IMR-90 (cell line): ENCODE measurements at regions of chr10 and their contacts with region 1.

Region 1: GRCh38 chr10:104317195-104317767 is 21.0 kb downstream of the ITPRIP start:
- DNase-seq: peak; percentile 81
- ATAC-seq: peak; percentile 57
- H3K4me3 ChIP-seq: no peak overlapping the region
- H3K27ac ChIP-seq: peak overlapping the region; percentile 44; the same call in 1 of the 2 replicates
- H3K4me1 ChIP-seq: peaks cover 42% of the 10 kb centered on the region
- H3K27me3 ChIP-seq: no peaks in the 10 kb centered on the region
- CTCF ChIP-seq: 0 out of 2 replicates have a peak, but pooled peaks have one; percentile 1
- POLR2A ChIP-seq: peak; percentile 18
- RAD21 ChIP-seq: no peak

Region 2: DNA sequence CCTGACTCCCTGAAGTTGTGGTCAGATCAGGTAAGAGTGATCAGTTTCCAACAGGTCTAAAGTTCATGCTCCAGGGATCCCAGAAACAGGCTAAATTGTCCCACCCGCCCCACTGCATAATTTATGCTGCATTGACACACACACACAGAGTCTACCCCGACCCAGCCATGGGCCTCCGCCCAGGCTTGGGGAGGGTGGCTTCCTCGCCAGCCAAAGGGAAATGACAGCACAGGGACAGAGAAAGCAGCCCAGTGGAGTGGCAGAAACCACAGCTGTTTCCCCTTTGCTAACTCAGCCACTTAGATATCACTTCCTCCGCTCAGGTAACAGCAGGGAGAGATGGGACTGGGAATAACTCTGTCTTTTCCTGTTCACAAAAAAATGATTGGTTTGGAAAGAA is 471.3 kb before region 1 on chr10:
- CTCF ChIA-PET with region 1: no interaction called
- POLR2A ChIA-PET with region 1: no interaction called
- dilution Hi-C with region 1: no loop called
- in situ Hi-C with region 1: no loop called
- intact Hi-C with region 1: no loop called
- DNase-seq: no peak
- ATAC-seq: no peak
- H3K4me3 ChIP-seq: no peak overlapping the region
- H3K27ac ChIP-seq: no peak overlapping the region
- H3K4me1 ChIP-seq: peaks cover 20% of the 10 kb centered on the region
- H3K27me3 ChIP-seq: no peaks in the 10 kb centered on the region
- CTCF ChIP-seq: no peak
- POLR2A ChIP-seq: no peak
- RAD21 ChIP-seq: no peak

Region 3: GRCh38 chr10:104127411-104127810 is 189.9 kb before region 1 on chr10:
- CTCF ChIA-PET with region 1: no interaction called
- POLR2A ChIA-PET with region 1: no interaction called
- dilution Hi-C with region 1: no loop called
- in situ Hi-C with region 1: no loop called
- intact Hi-C with region 1: no loop called
- DNase-seq: no peak
- ATAC-seq: peak; percentile 29; the same call in 1 of the 2 replicates
- H3K4me3 ChIP-seq: no peak overlapping the region
- H3K27ac ChIP-seq: no peak overlapping the region
- H3K4me1 ChIP-seq: no peaks in the 10 kb centered on the region
- H3K27me3 ChIP-seq: no peaks in the 10 kb centered on the region
- CTCF ChIP-seq: no peak
- POLR2A ChIP-seq: no peak
- RAD21 ChIP-seq: no peak

Region 4: DNA sequence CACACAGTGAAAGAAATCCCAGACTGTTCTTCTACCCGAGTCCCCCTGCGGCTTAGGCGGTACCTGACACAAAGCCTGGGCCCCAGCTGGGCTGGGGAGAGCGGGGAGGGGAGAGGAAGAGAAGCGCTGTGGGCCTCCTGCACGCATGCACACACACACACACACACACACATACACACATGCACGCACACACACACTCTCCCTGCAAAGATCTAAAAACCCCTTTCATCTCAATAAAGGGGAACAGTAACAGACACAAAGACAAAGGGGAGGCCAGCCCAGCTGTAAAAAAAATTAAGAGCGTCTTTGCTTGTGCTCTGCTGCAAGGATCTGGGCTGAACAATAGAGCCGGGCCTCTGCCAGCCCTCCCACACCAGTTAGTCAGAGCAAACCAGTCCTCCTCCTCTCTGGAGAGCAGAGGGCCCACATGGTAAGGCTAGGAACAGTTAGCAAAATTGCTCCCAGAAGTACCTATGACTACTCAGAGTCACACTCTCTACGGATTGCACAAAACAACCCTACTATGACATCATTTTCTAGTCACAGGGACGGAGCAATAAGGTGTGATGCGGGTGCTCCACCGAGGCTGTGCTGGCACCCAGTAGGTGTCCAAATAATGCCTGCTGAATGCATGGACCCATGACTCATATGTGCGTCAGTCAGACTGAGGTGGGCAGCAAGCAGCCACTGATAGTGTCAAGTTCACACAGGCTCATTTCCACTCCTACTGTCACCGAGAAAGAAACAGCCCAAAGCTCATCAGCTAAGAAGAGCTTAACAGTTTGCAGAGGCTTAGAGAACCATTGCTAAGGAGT is 11.8 kb after region 1 on chr10:
- CTCF ChIA-PET with region 1: interaction called, 3 read pairs
- POLR2A ChIA-PET with region 1: interaction called, 3 read pairs
- dilution Hi-C with region 1: no loop called
- in situ Hi-C with region 1: no loop called
- intact Hi-C with region 1: loop called (anchors 2 kb)
- DNase-seq: peak; percentile 97
- ATAC-seq: peak; percentile 50
- H3K4me3 ChIP-seq: no peak overlapping the region
- H3K27ac ChIP-seq: peak overlapping the region; percentile 76
- H3K4me1 ChIP-seq: peaks cover 63% of the 10 kb centered on the region
- H3K27me3 ChIP-seq: no peaks in the 10 kb centered on the region
- CTCF ChIP-seq: no peak
- POLR2A ChIP-seq: peak; percentile 73; the same call in 1 of the 2 replicates
- RAD21 ChIP-seq: 0 out of 2 replicates have a peak, but pooled peaks have one; percentile 2

Region 5: DNA sequence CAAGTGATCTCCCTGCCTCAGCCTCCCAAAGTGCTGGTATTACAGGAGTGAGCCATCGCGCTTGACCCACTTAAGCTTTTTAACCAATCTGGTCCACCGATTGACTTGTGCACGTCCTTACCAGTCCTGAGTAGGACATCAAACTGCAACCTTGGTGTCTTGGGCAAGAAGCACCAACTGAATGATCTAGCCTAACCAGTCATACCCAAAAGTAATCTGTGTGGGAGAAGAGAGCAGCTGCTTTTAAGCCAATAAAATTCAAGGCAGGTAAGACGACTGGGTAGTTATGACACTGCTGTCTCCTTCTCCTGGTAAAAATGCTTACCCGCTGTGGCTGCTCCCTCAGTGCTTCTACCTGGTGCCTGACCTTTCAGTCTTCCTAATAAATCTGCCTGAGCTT is 29.6 kb after region 1 on chr10:
- CTCF ChIA-PET with region 1: no interaction called
- POLR2A ChIA-PET with region 1: interaction called, 13 read pairs
- dilution Hi-C with region 1: no loop called
- in situ Hi-C with region 1: no loop called
- intact Hi-C with region 1: no loop called
- DNase-seq: no peak
- ATAC-seq: no peak
- H3K4me3 ChIP-seq: no peak overlapping the region
- H3K27ac ChIP-seq: no peak overlapping the region
- H3K4me1 ChIP-seq: peaks cover 7% of the 10 kb centered on the region; the same call in 1 of the 2 replicates
- H3K27me3 ChIP-seq: no peaks in the 10 kb centered on the region
- CTCF ChIP-seq: no peak
- POLR2A ChIP-seq: no peak
- RAD21 ChIP-seq: no peak